GM23248 (cell line): ENCODE measurements at regions of chr13 and their contacts with region 1.

Region 1: DNA sequence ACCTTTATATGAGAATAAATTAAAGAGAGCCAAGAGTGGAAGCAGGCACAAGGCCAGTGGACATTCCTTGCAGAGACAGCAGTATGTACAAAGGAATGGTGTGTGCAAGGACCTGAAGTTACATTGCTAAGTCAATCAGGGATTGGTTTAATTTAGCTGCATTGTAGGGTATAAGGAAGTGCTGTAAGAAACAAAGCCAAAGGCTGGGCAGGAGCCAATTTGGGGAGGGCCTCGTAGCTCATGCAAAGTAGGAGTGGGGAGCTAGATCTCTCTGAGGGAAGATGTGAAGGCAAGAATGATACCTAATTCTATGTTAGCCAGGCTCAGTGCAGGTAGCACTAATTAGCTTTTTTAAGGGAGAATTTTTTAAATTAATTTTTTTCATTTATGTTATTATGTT is 76.7 kb downstream of the SLAIN1 start:
- DNase-seq: no peak
- H3K4me3 ChIP-seq: no peak overlapping the region
- H3K27ac ChIP-seq: no peak overlapping the region
- H3K4me1 ChIP-seq: no peaks in the 10 kb centered on the region
- H3K27me3 ChIP-seq: no peaks in the 10 kb centered on the region; the same call in none of the 2 replicates

Region 2: DNA sequence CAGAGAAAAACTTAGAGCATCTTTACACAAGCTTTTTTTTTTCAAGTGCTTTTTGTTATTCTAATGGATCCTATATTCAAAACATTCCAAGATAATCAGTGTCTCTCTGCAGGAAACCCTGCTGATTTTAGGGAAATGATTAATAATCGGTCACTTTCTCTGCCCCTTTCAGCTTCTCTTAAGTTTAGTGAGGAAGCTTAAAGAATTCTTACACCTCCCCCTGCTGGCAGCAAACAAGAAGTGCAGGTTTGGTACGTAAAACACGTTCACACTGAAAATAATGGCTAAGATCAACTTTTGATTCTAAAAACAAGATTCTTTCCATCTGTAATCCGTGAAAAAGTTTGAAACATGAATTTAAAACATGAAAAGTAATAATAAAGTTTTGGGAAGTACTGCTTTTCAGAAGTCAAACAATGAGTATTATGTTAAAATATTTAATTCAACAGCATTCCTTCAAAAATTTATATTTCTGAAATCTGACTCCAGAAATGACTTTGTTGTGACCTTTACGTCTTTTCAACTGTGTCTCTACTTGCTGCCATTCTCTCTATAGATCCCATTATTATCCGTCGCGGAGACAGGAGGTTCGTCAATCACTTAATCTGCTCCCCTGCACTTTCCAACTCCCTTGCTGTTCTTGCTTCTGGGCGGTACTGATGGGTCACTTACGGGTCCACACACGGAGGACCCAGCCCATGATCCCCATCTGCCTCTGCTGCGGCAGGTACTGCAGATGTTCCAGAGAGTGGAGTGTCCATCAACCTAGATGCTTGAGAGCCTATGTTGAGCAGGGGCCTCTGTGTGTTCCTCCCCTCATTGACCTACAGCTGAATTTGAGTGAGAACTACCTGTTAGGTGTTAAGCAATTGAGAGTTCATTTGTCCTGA is 347.5 kb after region 1 on chr13:
- in situ Hi-C with region 1: loop called (anchors 5 kb)
- DNase-seq: peak; percentile 72
- H3K4me3 ChIP-seq: no peak overlapping the region
- H3K27ac ChIP-seq: no peak overlapping the region
- H3K4me1 ChIP-seq: no peaks in the 10 kb centered on the region
- H3K27me3 ChIP-seq: peaks cover 23% of the 10 kb centered on the region

Region 3: GRCh38 chr13:78183732-78184131 is 409.6 kb after region 1 on chr13:
- in situ Hi-C with region 1: no loop called
- DNase-seq: peak; percentile 45
- H3K4me3 ChIP-seq: no peak overlapping the region
- H3K27ac ChIP-seq: no peak overlapping the region
- H3K4me1 ChIP-seq: peaks cover 26% of the 10 kb centered on the region
- H3K27me3 ChIP-seq: no peaks in the 10 kb centered on the region